Mammary epithelial cell (primary cell): ENCODE measurements at regions of chr13 and their contacts with region 1.

Region 1: DNA sequence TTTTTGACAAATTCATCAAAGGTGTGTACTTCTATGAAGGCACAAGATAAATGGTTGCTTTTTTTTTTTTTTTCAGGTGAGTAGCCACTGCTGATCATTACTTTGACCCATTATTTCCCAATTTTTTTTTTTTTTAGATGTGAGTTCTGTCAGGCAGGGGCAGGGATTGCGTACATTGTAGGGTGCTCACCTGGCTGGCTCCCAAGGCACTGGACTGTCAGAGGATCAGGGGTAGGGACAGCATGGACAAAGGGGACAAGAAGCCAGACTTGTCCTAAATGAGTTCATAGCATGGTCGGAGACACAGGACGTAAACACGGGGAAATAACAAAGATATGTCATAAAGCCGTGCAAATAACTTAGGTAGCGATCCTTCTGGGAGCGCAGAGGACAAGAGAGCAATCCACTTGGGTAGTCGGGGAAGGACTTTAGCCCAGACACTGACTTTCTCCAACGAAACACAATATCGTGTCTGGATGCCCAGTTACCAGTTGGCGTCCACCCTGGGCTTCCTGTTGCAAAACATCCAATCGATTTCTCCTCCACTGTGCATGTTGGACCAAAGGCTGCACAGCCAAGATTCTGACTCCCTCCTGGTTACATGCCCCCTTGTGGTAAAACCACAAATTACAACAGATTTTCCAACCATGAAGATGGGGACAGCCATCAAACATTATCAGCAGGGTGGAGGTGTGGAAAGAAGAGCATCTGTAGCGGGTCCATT is 27.5 kb upstream of the KATNAL1 start:
- DNase-seq: no peak
- H3K4me3 ChIP-seq: no peak overlapping the region
- H3K27ac ChIP-seq: no peak overlapping the region
- H3K4me1 ChIP-seq: peaks cover 11% of the 10 kb centered on the region
- H3K27me3 ChIP-seq: no peaks in the 10 kb centered on the region
- CTCF ChIP-seq: peak; percentile 53 to 58

Region 2: DNA sequence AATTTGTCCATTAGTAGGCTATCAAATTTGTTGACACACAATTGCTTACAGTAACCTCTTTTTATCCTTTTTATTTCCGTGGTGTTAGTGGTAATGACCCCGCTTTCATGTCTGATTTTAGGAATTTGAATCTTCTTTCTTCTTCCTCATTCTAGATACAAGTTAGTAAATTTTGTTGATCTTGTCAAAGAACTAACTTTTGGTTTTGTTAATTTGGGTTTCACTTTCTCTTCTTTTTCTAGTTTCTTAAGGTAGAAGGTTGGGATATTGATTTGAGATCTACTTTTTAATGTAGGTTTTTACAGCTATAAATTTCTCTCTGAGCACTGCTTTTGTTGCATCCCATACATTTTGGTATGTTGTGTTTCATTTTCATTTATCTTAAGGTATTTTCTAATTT is 686.1 kb before region 1 on chr13:
- CTCF ChIA-PET with region 1: no interaction called
- dilution Hi-C with region 1: no loop called
- in situ Hi-C with region 1: no loop called
- intact Hi-C with region 1: no loop called
- DNase-seq: no peak
- H3K4me3 ChIP-seq: no peak overlapping the region
- H3K27ac ChIP-seq: no peak overlapping the region
- H3K4me1 ChIP-seq: no peaks in the 10 kb centered on the region
- H3K27me3 ChIP-seq: no peaks in the 10 kb centered on the region
- CTCF ChIP-seq: no peak

Region 3: GRCh38 chr13:30257468-30258099 is 77.2 kb before region 1 on chr13:
- CTCF ChIA-PET with region 1: no interaction called
- dilution Hi-C with region 1: no loop called
- in situ Hi-C with region 1: no loop called
- intact Hi-C with region 1: loop called (anchors 1 kb)
- DNase-seq: no peak
- H3K4me3 ChIP-seq: no peak overlapping the region
- H3K27ac ChIP-seq: no peak overlapping the region
- H3K4me1 ChIP-seq: no peaks in the 10 kb centered on the region
- H3K27me3 ChIP-seq: no peaks in the 10 kb centered on the region
- CTCF ChIP-seq: no peak

Region 4: DNA sequence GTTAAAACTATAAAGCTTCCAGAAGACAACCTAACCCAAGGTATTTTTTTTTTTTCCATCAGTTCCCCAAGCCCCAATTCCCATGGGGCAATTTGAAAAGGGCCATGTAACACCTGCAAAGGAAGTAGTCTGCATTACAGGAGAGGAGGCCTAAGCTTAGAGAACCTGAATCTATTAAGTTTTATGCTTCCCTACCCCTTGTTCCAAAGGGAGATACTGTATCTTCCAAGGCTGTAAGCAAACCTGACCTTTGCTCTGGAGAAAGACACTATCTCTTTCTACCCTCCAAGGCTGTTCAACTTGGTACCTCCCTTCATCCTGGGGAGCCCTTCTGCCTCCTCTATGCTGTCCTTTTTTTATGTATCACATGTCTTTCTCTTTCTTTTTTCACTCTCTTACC is 42.5 kb before region 1 on chr13:
- CTCF ChIA-PET with region 1: no interaction called
- dilution Hi-C with region 1: loop called (anchors 5 kb)
- in situ Hi-C with region 1: no loop called
- intact Hi-C with region 1: no loop called
- DNase-seq: no peak
- H3K4me3 ChIP-seq: no peak overlapping the region
- H3K27ac ChIP-seq: no peak overlapping the region
- H3K4me1 ChIP-seq: no peaks in the 10 kb centered on the region
- H3K27me3 ChIP-seq: no peaks in the 10 kb centered on the region
- CTCF ChIP-seq: no peak

Region 5: GRCh38 chr13:30306762-30307193 is 28.0 kb before region 1 on chr13:
- CTCF ChIA-PET with region 1: no interaction called
- dilution Hi-C with region 1: no loop called
- in situ Hi-C with region 1: no loop called
- intact Hi-C with region 1: no loop called
- DNase-seq: peak; percentile 87
- H3K4me3 ChIP-seq: peak overlapping the region; percentile 94 to 96 (median 96)
- H3K27ac ChIP-seq: peak overlapping the region; percentile 67
- H3K4me1 ChIP-seq: peaks cover 23% of the 10 kb centered on the region
- H3K27me3 ChIP-seq: no peaks in the 10 kb centered on the region
- CTCF ChIP-seq: no peak

Region 6: GRCh38 chr13:30388406-30389283 is 53.8 kb after region 1 on chr13:
- CTCF ChIA-PET with region 1: no interaction called
- dilution Hi-C with region 1: no loop called
- in situ Hi-C with region 1: no loop called
- intact Hi-C with region 1: no loop called
- DNase-seq: peak; percentile 42
- H3K4me3 ChIP-seq: no peak overlapping the region
- H3K27ac ChIP-seq: no peak overlapping the region
- H3K4me1 ChIP-seq: peaks cover 17% of the 10 kb centered on the region
- H3K27me3 ChIP-seq: no peaks in the 10 kb centered on the region
- CTCF ChIP-seq: no peak